HEK293 (cell line): ENCODE measurements at regions of chr16 and their contacts with region 1.

Region 1: GRCh38 chr16:71526111-71526631 is at the start of gene CHST4:
- H3K4me3 ChIP-seq: peak within 1 kb of the TSS; percentile 17
- H3K27ac ChIP-seq: no peak within 1 kb of the TSS; the same call in 1 of the 2 replicates
- H3K4me1 ChIP-seq: peaks cover 6% of the 10 kb centered on the region
- CTCF ChIP-seq: no peak

Region 2: GRCh38 chr16:71373073-71373472 is 153.1 kb before region 1 on chr16:
- CTCF ChIA-PET with region 1: no interaction called
- POLR2A ChIA-PET with region 1: no interaction called
- H3K4me3 ChIP-seq: no peak overlapping the region
- H3K27ac ChIP-seq: no peak overlapping the region
- H3K4me1 ChIP-seq: no peaks in the 10 kb centered on the region; the same call in 1 of the 2 replicates
- CTCF ChIP-seq: no peak

Region 3: DNA sequence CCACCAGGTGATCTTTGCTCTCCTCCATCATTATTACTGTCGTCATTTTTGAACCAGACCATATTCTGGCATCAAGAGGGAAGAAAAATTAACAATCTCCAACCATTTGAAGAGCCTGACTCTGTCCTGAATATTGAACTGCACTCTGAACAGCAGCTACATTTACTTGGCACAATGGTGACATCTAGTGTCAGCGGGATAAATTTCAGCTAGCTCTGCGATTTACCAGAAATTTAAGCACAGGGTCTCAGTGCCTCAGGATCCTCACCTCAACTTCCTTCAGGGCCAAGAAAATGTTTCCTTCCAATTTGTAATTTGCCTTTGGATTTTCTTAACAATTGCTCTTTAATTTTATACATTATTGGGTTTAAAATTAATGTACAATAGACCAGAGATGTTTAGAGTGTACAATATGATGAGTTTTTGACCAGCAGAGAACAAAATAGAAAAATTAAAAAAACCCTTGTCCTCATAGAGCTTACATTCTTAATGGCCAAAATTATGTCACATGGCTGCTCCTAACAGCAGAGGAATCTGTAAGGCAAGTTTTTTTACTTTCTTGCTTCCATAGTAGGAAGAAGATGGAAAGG is 26.3 kb before region 1 on chr16:
- CTCF ChIA-PET with region 1: interaction called, 18 read pairs
- POLR2A ChIA-PET with region 1: no interaction called
- H3K4me3 ChIP-seq: no peak overlapping the region
- H3K27ac ChIP-seq: no peak overlapping the region
- H3K4me1 ChIP-seq: no peaks in the 10 kb centered on the region
- CTCF ChIP-seq: no peak

Region 4: DNA sequence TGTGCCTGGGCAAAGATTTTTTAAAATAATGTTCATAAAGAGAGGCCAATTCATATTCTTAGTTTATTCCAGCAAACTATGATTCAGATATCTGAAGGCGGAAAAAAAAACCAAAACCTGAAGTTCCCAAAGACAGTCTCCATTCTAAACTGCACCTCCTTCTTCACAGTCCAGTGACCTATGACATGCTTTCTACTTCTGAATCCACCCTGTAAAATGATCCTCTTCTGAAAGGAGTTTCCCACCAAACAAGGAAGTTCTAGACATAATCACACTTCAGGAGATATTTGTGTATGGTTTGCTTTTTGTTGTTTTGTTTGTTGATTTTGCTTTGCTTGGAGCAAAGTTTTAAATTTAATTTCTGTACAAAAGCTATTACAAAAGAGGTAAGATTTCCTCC is 12.9 kb before region 1 on chr16:
- CTCF ChIA-PET with region 1: no interaction called
- POLR2A ChIA-PET with region 1: no interaction called
- H3K4me3 ChIP-seq: no peak overlapping the region
- H3K27ac ChIP-seq: no peak overlapping the region
- H3K4me1 ChIP-seq: no peaks in the 10 kb centered on the region
- CTCF ChIP-seq: no peak

Region 5: DNA sequence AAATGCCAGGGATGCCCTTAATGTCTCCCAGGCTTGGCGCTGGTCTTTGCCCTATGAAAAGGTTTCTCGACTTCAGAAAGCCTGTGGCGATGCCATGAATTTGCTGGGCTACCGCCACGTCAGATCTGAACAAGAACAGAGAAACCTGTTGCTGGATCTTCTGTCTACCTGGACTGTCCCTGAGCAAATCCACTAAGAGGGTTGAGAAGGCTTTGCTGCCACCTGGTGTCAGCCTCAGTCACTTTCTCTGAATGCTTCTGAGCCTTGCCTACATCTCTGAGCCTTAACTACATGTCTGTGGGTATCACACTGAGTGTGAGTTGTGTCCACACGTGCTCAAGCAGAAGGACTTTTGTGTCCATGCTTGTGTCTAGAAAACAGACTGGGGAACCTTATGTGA is 11.5 kb after region 1 on chr16:
- CTCF ChIA-PET with region 1: interaction called, 11 read pairs
- POLR2A ChIA-PET with region 1: no interaction called
- H3K4me3 ChIP-seq: no peak overlapping the region
- H3K27ac ChIP-seq: no peak overlapping the region
- H3K4me1 ChIP-seq: no peaks in the 10 kb centered on the region
- CTCF ChIP-seq: peak; percentile 53; the same call in 1 of the 2 replicates

Region 6: GRCh38 chr16:71564155-71564967 is 38.2 kb after region 1 on chr16:
- CTCF ChIA-PET with region 1: no interaction called
- POLR2A ChIA-PET with region 1: interaction called, 11 read pairs
- H3K4me3 ChIP-seq: peak overlapping the region; percentile 51
- H3K27ac ChIP-seq: no peak overlapping the region; the same call in 1 of the 2 replicates
- H3K4me1 ChIP-seq: 0 out of 2 replicates have a peak, but pooled peaks cover 4% of the 10 kb centered on the region
- CTCF ChIP-seq: no peak

Region 7: DNA sequence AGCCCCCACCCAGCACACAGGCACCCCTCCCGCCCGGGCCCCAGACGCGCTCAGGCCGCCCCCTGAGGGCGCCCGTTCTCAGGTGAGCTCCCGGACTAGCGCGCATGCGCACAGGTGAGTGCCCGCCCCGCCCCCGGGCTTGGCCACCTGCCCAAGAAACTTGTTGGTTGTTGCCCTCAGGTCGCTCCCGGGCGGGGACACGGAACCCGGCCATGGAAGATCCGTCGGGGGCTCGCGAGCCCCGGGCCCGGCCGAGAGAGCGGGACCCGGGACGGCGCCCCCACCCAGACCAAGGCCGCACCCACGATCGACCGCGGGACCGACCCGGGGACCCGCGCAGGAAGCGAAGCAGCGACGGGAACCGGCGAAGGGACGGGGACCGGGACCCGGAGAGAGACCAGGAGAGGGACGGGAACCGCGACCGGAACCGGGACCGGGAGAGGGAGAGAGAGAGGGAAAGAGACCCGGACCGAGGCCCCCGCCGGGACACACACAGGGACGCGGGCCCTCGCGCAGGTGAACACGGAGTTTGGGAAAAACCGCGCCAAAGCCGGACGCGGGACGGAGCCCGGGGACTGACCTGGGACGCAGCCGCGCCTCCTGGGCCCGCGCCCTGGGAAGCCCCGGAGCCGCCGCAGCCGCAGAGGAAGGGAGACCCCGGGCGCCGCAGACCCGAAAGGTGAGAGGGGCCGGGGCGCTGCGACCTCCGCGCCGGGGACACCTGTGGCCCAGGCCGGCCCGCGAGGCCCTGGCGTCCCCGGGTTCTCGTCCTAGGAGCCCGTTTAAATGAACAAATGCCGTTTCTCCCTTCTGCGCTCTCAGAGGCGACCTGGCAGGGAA is 100.1 kb after region 1 on chr16 and contains the start of gene MARVELD3:
- CTCF ChIA-PET with region 1: no interaction called
- POLR2A ChIA-PET with region 1: no interaction called
- H3K4me3 ChIP-seq: peak within 1 kb of the TSS; percentile 69
- H3K27ac ChIP-seq: peak within 1 kb of the TSS; percentile 70; the same call in 1 of the 2 replicates
- H3K4me1 ChIP-seq: peaks cover 2% of the 10 kb centered on the region; the same call in 1 of the 2 replicates
- CTCF ChIP-seq: no peak